ENCODE measurements at regions of chr3 and their contacts with region 1.

Region 1: GRCh38 chr3:188914552-188914951 is 257.2 kb upstream of the TPRG1 start:
- DNase-seq: peak; percentile 42
- ATAC-seq: peak; percentile 82
- H3K4me3 Mint-ChIP-seq: no peak overlapping the region
- H3K27ac Mint-ChIP-seq: peak overlapping the region; percentile 90
- H3K4me1 Mint-ChIP-seq: peaks cover 46% of the 10 kb centered on the region
- H3K27me3 Mint-ChIP-seq: peaks cover 3% of the 10 kb centered on the region

Region 2: GRCh38 chr3:187490366-187490765 is 1424.2 kb before region 1 on chr3:
- CTCF ChIA-PET with region 1: no interaction called
- POLR2A ChIA-PET with region 1: no interaction called
- intact Hi-C with region 1: no loop called
- DNase-seq: no peak
- ATAC-seq: no peak
- H3K4me3 Mint-ChIP-seq: no peak overlapping the region
- H3K27ac Mint-ChIP-seq: no peak overlapping the region
- H3K4me1 Mint-ChIP-seq: no peaks in the 10 kb centered on the region
- H3K27me3 Mint-ChIP-seq: peaks cover 28% of the 10 kb centered on the region

Region 3: DNA sequence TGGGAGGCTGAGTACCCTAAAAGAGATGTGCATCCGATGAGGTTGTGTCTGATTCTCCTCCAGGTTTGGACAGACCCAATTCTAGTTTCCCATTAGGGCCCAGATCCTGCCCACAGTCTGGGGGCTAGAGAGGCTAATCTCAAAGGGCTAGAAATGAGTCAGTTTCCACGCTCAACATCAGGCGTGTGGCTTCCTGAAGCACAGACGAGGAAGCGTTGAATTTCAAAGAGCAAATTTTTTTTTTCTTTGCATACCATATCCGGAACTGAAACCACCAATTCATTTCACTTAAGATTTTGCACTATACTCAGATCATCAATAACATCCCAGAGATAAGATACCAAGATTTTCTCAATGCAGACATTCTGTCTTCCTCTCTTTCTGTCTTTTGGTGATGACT is 995.5 kb before region 1 on chr3:
- CTCF ChIA-PET with region 1: no interaction called
- POLR2A ChIA-PET with region 1: no interaction called
- intact Hi-C with region 1: loop called (anchors 1 kb)
- DNase-seq: peak; percentile 69
- ATAC-seq: peak; percentile 50
- H3K4me3 Mint-ChIP-seq: peak overlapping the region; percentile 59
- H3K27ac Mint-ChIP-seq: peak overlapping the region; percentile 86
- H3K4me1 Mint-ChIP-seq: peaks cover 70% of the 10 kb centered on the region
- H3K27me3 Mint-ChIP-seq: peaks cover 2% of the 10 kb centered on the region

Region 4: GRCh38 chr3:188179006-188179966 is 735.3 kb before region 1 on chr3:
- CTCF ChIA-PET with region 1: no interaction called
- POLR2A ChIA-PET with region 1: no interaction called
- intact Hi-C with region 1: loop called in 1 of 2 experiments (anchors 10 kb)
- DNase-seq: no peak
- ATAC-seq: no peak
- H3K4me3 Mint-ChIP-seq: no peak overlapping the region
- H3K27ac Mint-ChIP-seq: no peak overlapping the region
- H3K4me1 Mint-ChIP-seq: peaks cover 30% of the 10 kb centered on the region
- H3K27me3 Mint-ChIP-seq: no peaks in the 10 kb centered on the region

Region 5: GRCh38 chr3:188339410-188340295 is 574.9 kb before region 1 on chr3:
- CTCF ChIA-PET with region 1: no interaction called
- POLR2A ChIA-PET with region 1: no interaction called
- intact Hi-C with region 1: loop called (anchors 1 kb)
- DNase-seq: peak; percentile 76
- ATAC-seq: peak; percentile 89
- H3K4me3 Mint-ChIP-seq: peak overlapping the region; percentile 54
- H3K27ac Mint-ChIP-seq: peak overlapping the region; percentile 95
- H3K4me1 Mint-ChIP-seq: peaks cover 43% of the 10 kb centered on the region
- H3K27me3 Mint-ChIP-seq: no peaks in the 10 kb centered on the region

Region 6: DNA sequence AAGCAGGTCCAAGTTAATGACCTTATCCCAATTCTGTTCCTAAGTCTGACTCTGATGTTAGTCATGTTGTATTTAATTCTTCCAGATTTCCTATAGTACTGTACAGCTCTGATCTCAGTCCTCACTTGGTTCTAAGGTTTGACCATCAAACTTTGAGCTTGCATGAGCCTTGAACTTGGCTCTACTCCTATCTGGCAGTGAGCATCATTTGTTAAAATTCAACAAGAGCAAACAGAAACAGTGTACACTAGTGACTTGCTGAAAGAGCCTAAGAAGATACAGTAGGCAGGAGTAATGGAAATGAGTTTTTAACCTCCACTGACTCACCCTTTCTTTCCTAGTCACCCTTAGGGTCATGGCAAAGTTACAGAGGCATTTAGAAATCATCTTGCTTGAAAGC is 193.9 kb before region 1 on chr3:
- CTCF ChIA-PET with region 1: no interaction called
- POLR2A ChIA-PET with region 1: no interaction called
- intact Hi-C with region 1: loop called (anchors 1 to 10 kb)
- DNase-seq: no peak
- ATAC-seq: peak; percentile 83
- H3K4me3 Mint-ChIP-seq: no peak overlapping the region
- H3K27ac Mint-ChIP-seq: no peak overlapping the region
- H3K4me1 Mint-ChIP-seq: peaks cover 37% of the 10 kb centered on the region
- H3K27me3 Mint-ChIP-seq: peaks cover 9% of the 10 kb centered on the region

Region 7: DNA sequence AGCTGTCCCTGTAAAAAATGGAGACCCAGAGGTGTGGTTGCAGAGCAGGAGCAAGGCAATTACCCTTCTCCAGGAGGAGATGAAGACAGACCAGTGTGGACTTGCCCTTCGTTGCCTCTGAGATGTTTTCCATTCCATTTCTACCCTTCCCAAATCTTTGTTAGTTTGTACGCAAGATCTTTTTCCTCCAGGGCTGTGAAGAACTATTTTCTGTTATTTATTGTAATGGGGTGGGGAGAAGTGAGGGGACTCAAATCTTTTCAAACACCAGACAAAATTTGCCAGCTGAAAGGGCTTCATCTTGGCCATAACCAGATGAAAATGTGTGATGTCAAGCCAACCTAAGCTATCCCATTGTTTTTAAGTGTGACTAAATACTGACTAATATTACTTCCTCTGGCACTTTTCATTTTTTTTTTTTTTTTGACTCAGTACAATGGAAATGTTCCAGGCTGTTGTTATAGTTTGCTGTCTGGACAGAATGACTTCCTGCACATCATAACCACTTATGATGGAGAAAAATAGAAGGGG is 14.1 kb before region 1 on chr3:
- CTCF ChIA-PET with region 1: no interaction called
- POLR2A ChIA-PET with region 1: no interaction called
- intact Hi-C with region 1: no loop called
- DNase-seq: no peak
- ATAC-seq: peak; percentile 51
- H3K4me3 Mint-ChIP-seq: no peak overlapping the region
- H3K27ac Mint-ChIP-seq: no peak overlapping the region
- H3K4me1 Mint-ChIP-seq: peaks cover 8% of the 10 kb centered on the region
- H3K27me3 Mint-ChIP-seq: no peaks in the 10 kb centered on the region

Region 8: GRCh38 chr3:189041482-189042090 is 127.0 kb after region 1 on chr3:
- CTCF ChIA-PET with region 1: interaction called, 10 read pairs
- POLR2A ChIA-PET with region 1: no interaction called
- intact Hi-C with region 1: loop called (anchors 1 to 2 kb)
- DNase-seq: peak; percentile 87
- ATAC-seq: peak; percentile 93
- H3K4me3 Mint-ChIP-seq: no peak overlapping the region
- H3K27ac Mint-ChIP-seq: no peak overlapping the region
- H3K4me1 Mint-ChIP-seq: peaks cover 36% of the 10 kb centered on the region
- H3K27me3 Mint-ChIP-seq: peaks cover 6% of the 10 kb centered on the region